ENCODE measurements at regions of chr13 and their contacts with region 1.

Region 1: DNA sequence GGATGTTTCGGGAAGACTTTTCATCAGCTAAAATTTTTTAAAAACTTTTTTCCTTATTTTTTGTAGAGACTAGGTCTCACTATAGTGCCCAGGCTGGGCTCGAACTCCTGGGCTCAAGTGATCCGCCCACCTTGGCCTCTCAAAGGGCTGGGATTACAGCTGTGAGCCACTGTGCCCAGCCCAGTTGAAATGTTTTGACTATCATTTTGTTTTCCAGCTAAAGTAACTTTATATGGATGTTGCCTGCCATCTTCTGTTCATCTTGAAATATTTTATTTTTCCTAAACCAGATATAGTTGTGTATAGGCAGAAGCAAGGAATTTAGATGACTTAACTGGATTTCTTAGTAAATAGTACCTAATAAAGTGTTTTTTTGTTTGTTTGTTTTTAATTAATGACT is 7.0 kb downstream of the CAB39L start:
- DNase-seq: no peak
- H3K4me3 ChIP-seq: no peak overlapping the region
- CTCF ChIP-seq: no peak

Region 2: DNA sequence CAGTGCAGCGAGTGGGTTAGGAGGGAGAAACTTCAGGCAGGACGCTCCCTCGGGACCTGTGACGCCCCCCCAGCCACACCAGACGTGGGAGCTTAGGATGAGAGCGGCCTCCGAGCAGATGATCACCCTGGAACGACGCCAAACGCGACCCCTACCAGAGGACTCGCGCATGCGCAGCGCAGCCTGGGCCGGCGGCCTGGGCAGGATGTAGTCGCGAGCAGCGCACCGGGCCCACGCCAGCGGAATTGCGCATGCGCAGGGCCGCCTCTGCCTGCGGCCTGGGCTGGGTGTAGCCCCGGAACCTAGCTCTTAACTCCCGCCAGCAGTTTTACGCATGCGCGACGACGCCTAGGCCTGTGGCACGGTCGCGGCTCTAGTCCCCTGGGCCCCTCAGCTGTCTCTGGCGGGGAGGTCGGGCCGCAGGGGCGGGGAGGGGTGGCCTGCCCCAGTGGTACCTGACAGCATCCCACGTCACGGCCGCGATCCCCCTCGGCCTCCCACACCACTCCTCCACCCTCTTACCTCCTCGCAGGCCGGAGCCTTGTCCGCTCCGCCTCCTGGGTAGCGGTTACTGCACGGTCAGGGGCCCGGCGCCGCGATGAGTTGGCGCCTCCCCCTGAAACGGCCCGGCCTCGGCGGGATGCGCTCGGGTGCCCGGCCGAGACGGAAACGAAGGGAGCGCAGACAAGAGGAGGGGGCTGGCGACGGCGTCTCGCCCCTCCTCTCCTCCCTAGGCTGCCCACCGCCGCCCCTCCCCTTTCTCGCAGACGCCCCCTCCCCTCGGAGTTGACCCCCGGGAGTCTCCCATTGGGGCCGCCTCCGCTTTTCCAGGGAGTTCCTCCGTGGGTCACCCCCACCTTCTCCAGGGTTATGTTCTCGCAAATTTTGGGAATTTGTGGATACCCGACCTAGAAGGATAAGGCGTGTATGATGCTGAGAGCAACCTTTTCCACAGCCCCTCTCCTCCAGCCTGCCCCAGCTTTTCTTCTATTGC is 904.1 kb before region 1 on chr13 and contains the start of gene RCBTB2:
- CTCF ChIA-PET with region 1: no interaction called
- POLR2A ChIA-PET with region 1: no interaction called
- DNase-seq: peak; percentile 75
- H3K4me3 ChIP-seq: peak within 1 kb of the TSS; percentile 77
- CTCF ChIP-seq: no peak

Region 3: GRCh38 chr13:48962281-48962680 is 474.6 kb before region 1 on chr13:
- CTCF ChIA-PET with region 1: no interaction called
- POLR2A ChIA-PET with region 1: no interaction called
- DNase-seq: no peak
- H3K4me3 ChIP-seq: no peak overlapping the region
- CTCF ChIP-seq: no peak

Region 4: DNA sequence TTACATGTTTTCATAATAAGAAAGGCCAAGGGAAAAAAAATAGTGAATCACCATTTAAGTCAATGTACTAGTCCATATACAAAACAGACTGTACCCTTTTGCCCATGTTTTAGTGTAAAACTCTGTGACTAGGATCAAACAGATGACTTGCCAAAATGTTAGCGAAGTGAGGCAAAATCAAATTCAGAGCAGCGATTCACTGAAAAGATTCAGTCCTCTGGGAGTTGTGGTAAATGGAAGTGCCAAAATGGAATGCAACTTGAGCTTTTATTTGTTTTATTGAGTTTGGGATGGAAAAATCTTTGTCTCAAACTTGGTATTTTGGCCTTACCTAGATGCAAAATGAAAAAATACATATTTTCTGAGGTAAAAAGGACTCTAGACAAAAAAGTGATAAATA is 180.0 kb before region 1 on chr13:
- CTCF ChIA-PET with region 1: no interaction called
- POLR2A ChIA-PET with region 1: no interaction called
- DNase-seq: peak; percentile 21
- H3K4me3 ChIP-seq: no peak overlapping the region
- CTCF ChIP-seq: no peak

Region 5: GRCh38 chr13:49278211-49278610 is 158.7 kb before region 1 on chr13:
- CTCF ChIA-PET with region 1: interaction called, 20 read pairs
- POLR2A ChIA-PET with region 1: no interaction called
- DNase-seq: no peak
- H3K4me3 ChIP-seq: no peak overlapping the region
- CTCF ChIP-seq: no peak

Region 6: DNA sequence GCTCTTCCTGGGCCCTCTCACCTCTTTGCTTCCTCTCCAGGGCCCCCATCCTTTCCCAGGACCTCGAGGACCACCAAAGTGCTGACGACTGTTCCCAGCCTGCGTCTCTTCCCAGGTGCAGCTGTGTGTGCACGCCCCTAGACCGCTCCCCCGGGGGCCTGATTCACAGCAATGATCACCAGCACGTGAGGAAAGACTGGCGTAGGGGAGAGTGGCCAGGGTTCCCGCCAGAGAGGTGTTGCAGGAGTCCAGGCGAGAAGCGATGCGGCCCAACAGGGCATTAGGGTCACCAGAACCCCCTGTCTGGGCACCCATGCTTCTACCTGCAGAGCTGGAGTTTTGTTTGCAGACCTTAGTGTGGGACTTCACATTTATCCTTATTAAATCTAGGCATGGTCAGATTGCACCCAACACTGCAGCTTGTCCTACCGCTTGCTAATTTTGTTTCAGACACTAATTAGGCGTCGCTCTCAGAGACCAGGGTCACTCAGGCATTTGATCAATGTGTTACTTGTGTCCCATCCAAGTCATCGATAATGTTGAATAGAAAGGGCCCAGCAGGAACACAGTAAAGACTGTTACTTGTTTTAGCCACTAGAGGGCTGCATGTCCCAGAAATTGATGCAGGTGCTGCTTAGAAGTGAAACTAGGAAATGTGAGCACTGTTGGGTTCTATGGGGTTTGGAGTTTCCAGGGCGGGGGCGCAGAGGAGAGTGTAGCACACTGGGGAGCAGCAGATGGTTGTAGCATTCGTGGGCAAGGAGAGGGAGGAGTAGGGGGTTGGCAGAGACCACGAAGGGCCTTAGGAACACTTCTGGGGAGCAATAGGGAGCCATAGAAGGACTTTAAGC is 135.9 kb before region 1 on chr13:
- CTCF ChIA-PET with region 1: interaction called, 115 read pairs
- POLR2A ChIA-PET with region 1: no interaction called
- DNase-seq: no peak
- H3K4me3 ChIP-seq: no peak overlapping the region
- CTCF ChIP-seq: peak; percentile 76

Region 7: GRCh38 chr13:49314344-49314882 is 122.5 kb before region 1 on chr13:
- CTCF ChIA-PET with region 1: interaction called, 53 read pairs
- POLR2A ChIA-PET with region 1: no interaction called
- DNase-seq: no peak
- H3K4me3 ChIP-seq: no peak overlapping the region
- CTCF ChIP-seq: no peak

Region 8: DNA sequence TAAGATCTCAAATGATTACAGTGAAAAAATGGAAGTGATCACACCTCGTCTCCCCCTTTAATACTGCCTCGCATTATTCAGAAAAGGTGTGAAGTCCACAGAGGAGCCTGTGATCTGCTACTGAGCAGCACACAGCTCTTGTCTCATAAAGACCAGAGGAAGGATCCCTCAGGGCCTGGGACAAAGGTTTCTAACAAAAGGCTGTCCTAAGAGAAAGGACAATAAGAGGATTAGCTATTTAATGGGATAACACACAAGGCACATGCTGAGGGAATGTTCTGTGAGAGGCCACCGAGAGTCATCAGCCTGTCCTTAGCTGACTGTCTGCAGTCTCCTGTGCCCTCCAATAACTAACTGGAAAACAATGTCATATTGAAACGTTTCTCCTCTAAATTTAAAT is 227.7 kb after region 1 on chr13:
- CTCF ChIA-PET with region 1: no interaction called
- POLR2A ChIA-PET with region 1: no interaction called
- DNase-seq: no peak
- H3K4me3 ChIP-seq: no peak overlapping the region
- CTCF ChIP-seq: no peak

Measured in AG04449 (cell line).